H1 (cell line): ENCODE measurements at regions of chr9 and their contacts with region 1.

Region 1: GRCh38 chr9:87883990-87884389 is 1.3 kb downstream of the SPATA31E1 start:
- DNase-seq: peak in 1 of 2 experiments; percentile 81
- H3K4me3 ChIP-seq: no peak overlapping the region
- H3K27ac ChIP-seq: no peak overlapping the region
- H3K4me1 ChIP-seq: peaks cover 0 to 12% (median 1%) of the 10 kb centered on the region in 4 experiments; a peak in 5 of 7 replicates
- H3K27me3 ChIP-seq: no peaks in the 10 kb centered on the region; a peak in 1 of 7 replicates
- CTCF ChIP-seq: peak; percentile 58 to 76 (median 63)
- EP300 ChIP-seq: no peak
- POLR2A ChIP-seq: no peak
- RAD21 ChIP-seq: peak; percentile 31 to 62; a peak in 3 of 4 replicates

Region 2: DNA sequence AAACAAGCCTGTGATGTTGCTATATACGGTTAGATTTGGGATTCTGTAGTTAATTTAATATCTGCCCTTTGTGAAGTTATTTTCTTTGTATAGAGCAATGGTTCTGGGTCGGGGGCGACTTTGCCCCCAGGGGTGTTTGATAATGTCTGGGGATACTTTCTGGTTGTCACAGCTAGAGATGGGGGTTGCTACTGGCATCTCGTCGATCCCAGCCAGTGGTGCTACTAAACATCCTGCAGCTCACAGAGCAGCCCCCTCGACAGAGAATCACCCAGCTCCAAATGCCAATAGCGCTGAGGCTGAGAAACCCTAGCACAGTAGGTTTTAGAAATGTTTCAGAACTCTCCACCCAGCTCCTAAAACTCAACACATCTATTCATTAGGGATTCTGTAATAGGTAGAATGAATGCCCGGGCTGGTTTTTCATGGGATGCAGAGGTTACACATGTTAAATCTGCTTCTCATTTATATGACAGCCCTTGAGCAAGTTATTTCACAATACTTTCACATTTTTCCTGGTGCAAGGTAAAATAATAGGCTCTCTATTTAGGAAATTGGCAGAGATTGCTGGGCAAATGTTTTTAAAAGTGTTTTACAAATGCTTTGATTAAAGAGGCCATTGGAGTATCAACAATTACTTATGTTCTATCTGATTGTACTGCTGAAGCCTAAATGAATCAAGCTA is 233.2 kb before region 1 on chr9:
- CTCF ChIA-PET with region 1: no interaction called
- POLR2A ChIA-PET with region 1: no interaction called
- DNase-seq: no peak
- H3K4me3 ChIP-seq: no peak overlapping the region
- H3K27ac ChIP-seq: no peak overlapping the region
- H3K4me1 ChIP-seq: peaks cover 0 to 2% (median 0%) of the 10 kb centered on the region in 4 experiments; a peak in 1 of 7 replicates
- H3K27me3 ChIP-seq: no peaks in the 10 kb centered on the region
- CTCF ChIP-seq: no peak
- EP300 ChIP-seq: no peak
- POLR2A ChIP-seq: no peak
- RAD21 ChIP-seq: no peak

Region 3: GRCh38 chr9:87676986-87677601 is 206.9 kb before region 1 on chr9:
- CTCF ChIA-PET with region 1: no interaction called
- POLR2A ChIA-PET with region 1: no interaction called
- DNase-seq: no peak
- H3K4me3 ChIP-seq: no peak overlapping the region
- H3K27ac ChIP-seq: no peak overlapping the region
- H3K4me1 ChIP-seq: no peaks in the 10 kb centered on the region
- H3K27me3 ChIP-seq: no peaks in the 10 kb centered on the region
- CTCF ChIP-seq: no peak
- EP300 ChIP-seq: no peak
- POLR2A ChIP-seq: no peak
- RAD21 ChIP-seq: no peak

Region 4: GRCh38 chr9:87783180-87783579 is 100.8 kb before region 1 on chr9:
- CTCF ChIA-PET with region 1: no interaction called
- POLR2A ChIA-PET with region 1: no interaction called
- DNase-seq: no peak
- H3K4me3 ChIP-seq: no peak overlapping the region
- H3K27ac ChIP-seq: no peak overlapping the region
- H3K4me1 ChIP-seq: no peaks in the 10 kb centered on the region
- H3K27me3 ChIP-seq: no peaks in the 10 kb centered on the region
- CTCF ChIP-seq: no peak
- EP300 ChIP-seq: no peak
- POLR2A ChIP-seq: no peak
- RAD21 ChIP-seq: no peak

Region 5: GRCh38 chr9:87834357-87834756 is 49.6 kb before region 1 on chr9:
- CTCF ChIA-PET with region 1: interaction called, 25 read pairs
- POLR2A ChIA-PET with region 1: no interaction called
- DNase-seq: peak; percentile 49 to 86
- H3K4me3 ChIP-seq: no peak overlapping the region
- H3K27ac ChIP-seq: no peak overlapping the region
- H3K4me1 ChIP-seq: peaks cover 0 to 10% (median 2%) of the 10 kb centered on the region in 4 experiments; a peak in 3 of 7 replicates
- H3K27me3 ChIP-seq: peaks cover 0 to 3% (median 0%) of the 10 kb centered on the region in 4 experiments; a peak in 4 of 7 replicates
- CTCF ChIP-seq: peak; percentile 63 to 77 (median 75)
- EP300 ChIP-seq: no peak
- POLR2A ChIP-seq: no peak
- RAD21 ChIP-seq: peak; percentile 60 to 76

Region 6: GRCh38 chr9:87872079-87872624 is 11.8 kb before region 1 on chr9:
- CTCF ChIA-PET with region 1: interaction called, 30 read pairs
- POLR2A ChIA-PET with region 1: no interaction called
- DNase-seq: peak in 1 of 2 experiments; percentile 40
- H3K4me3 ChIP-seq: no peak overlapping the region
- H3K27ac ChIP-seq: no peak overlapping the region
- H3K4me1 ChIP-seq: peaks cover 0 to 3% (median under 1%) of the 10 kb centered on the region in 4 experiments; a peak in 2 of 7 replicates
- H3K27me3 ChIP-seq: no peaks in the 10 kb centered on the region
- CTCF ChIP-seq: no peak
- EP300 ChIP-seq: no peak
- POLR2A ChIP-seq: no peak
- RAD21 ChIP-seq: no peak

Region 7: DNA sequence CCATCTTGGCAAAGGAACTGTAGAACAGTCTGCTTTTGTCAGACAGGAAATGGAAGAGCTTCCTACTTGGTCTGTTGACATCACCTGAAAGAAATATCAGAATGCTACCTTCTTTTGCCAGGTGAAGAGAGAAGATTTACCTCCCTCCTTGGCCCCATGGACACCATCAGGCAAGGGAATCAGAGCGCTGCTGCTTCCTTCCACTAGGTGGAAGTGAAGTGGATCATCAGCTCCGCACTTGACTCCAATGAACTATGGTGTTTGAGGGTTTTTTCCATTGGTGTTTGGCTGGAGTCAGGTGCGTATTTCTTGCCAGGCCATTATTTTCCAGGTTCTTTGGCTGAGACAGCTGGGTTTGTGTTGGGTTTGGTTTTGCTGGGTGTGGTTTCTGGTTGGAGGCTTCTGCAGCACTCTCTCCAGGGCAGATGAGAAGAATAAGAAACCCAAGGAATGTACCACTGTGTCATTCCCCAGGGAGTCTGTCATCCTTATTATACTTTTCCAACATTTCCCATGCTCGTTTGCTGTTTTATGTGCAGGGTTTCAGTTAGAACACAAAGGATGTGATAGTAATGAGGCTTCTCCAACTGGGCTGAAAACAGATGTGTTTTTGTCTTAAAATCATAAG is 11.1 kb after region 1 on chr9:
- CTCF ChIA-PET with region 1: interaction called, 15 read pairs
- POLR2A ChIA-PET with region 1: no interaction called
- DNase-seq: peak in 1 of 2 experiments; percentile 43
- H3K4me3 ChIP-seq: no peak overlapping the region
- H3K27ac ChIP-seq: no peak overlapping the region
- H3K4me1 ChIP-seq: no peaks in the 10 kb centered on the region
- H3K27me3 ChIP-seq: no peaks in the 10 kb centered on the region
- CTCF ChIP-seq: peak; percentile 49 to 67 (median 54)
- EP300 ChIP-seq: no peak
- POLR2A ChIP-seq: no peak
- RAD21 ChIP-seq: peak; percentile 31 to 43